ENCODE measurements at regions of chr5 and their contacts with region 1.

Region 1: DNA sequence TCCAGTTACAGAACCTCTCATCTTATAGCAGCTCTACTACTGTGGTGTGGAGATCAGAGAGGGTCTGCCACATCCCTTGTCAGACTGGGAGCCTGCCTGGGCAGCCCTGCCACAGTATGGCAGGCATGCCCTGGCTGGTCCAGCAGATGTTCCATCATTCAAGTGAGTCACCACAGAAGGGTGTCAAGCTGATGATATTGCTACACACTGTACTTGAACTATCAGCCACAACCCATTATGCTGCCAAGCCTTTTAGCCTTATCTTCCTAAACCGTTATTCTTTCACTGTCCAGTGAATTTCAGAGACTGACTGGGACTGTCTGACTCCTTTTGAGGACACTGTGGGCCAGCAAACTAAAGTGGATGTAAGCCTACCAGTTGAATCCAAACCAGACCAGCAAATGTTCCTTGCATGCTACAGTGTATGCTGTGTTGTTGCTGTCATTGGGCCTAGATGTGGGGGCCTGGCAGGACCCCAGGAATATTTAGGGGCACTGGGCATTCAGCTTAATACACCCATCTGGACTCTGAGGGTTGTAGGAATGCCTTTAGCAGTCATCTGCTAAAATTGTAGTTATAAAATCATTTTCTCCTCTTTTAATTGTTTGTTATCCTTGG is 202.6 kb downstream of the NR3C1 start:
- DNase-seq: peak; percentile 96
- H3K4me3 ChIP-seq: no peak overlapping the region
- H3K27ac ChIP-seq: peak overlapping the region; percentile 68
- H3K4me1 ChIP-seq: peaks cover 67% of the 10 kb centered on the region
- H3K27me3 ChIP-seq: no peaks in the 10 kb centered on the region
- CTCF ChIP-seq: no peak

Region 2: DNA sequence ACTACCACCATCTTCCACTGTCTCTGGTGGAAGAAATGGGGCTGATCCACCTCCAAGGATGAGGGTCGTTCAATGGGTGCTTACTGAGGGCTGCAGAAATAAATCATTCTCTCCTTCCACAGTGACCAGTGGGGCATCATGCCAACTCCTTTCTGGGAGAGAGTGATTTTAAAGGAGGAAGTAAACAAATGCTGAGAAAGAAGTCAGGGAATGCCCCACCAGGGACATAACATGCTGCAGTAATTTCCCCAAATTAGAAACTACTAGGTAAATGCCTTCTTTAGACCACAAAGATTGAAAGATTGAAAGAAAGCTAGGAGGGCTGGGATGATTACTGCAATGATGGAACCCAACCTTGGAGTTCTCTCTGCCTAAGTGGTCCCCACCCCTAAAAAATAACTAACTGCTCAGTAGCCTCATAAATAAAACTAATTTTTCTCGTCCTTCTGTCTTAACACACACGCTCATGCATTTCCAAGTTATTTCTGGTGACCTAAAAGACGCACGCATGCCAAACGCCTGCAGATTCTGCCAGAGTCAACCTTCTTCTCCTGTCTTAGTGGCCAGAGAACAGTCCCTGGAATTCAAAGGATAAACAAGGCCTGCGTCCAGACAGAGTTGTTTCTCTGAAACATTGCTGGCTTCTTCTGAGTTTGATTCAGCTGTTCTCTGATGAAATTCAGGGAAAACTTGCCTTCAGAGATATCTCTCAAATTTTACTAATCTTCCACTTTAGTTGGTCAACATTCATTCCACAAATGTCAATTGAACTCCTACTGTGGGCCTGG is 47.4 kb before region 1 on chr5:
- CTCF ChIA-PET with region 1: no interaction called
- dilution Hi-C with region 1: no loop called
- in situ Hi-C with region 1: no loop called
- intact Hi-C with region 1: no loop called
- DNase-seq: no peak
- H3K4me3 ChIP-seq: no peak overlapping the region
- H3K27ac ChIP-seq: no peak overlapping the region
- H3K4me1 ChIP-seq: peaks cover 26% of the 10 kb centered on the region
- H3K27me3 ChIP-seq: no peaks in the 10 kb centered on the region
- CTCF ChIP-seq: no peak

Region 3: DNA sequence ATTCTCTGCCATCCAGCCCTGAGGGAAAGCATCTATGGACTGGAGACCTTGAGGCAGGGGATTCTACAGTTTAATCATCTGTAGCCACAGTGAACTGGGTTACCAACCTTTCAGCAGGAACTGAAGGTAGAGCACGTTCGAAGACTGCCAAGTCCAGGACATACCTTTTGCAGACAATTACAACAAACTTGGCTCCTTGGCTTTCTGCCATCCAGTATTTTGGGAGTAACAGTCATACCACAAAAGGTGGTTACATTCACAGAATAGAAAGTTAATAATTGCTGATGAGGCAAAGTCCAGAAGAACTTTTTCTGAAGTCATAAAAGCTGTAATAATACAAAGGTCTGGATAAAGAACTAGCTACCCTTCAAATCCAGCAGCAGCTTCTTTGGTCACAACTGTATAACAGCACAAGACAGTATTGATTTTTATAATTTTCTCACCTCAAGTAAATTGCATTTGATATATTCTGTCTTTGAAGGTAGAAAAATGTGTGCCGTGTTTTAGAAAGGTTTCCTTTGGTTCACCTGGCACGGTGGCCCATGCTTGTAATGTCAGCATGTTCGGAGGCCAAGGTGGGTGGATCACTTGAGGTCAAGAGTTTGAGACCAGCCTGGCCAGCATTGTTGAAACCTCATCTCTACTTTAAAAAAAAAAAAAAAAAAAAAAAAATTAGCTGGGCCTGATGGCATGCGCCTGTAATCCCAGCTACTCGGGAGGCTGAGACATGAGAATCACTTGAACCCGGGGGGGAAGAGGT is 34.0 kb before region 1 on chr5:
- CTCF ChIA-PET with region 1: no interaction called
- dilution Hi-C with region 1: no loop called
- in situ Hi-C with region 1: no loop called
- intact Hi-C with region 1: no loop called
- DNase-seq: no peak
- H3K4me3 ChIP-seq: no peak overlapping the region
- H3K27ac ChIP-seq: no peak overlapping the region
- H3K4me1 ChIP-seq: no peaks in the 10 kb centered on the region
- H3K27me3 ChIP-seq: no peaks in the 10 kb centered on the region
- CTCF ChIP-seq: no peak

Region 4: GRCh38 chr5:143244000-143244736 is 43.3 kb after region 1 on chr5:
- CTCF ChIA-PET with region 1: no interaction called
- dilution Hi-C with region 1: loop called (anchors 5 kb)
- in situ Hi-C with region 1: no loop called
- intact Hi-C with region 1: loop called (anchors 1 kb)
- DNase-seq: peak; percentile 95
- H3K4me3 ChIP-seq: peak overlapping the region; percentile 15 to 35 (median 31)
- H3K27ac ChIP-seq: peak overlapping the region; percentile 99
- H3K4me1 ChIP-seq: peaks cover 55% of the 10 kb centered on the region
- H3K27me3 ChIP-seq: no peaks in the 10 kb centered on the region
- CTCF ChIP-seq: no peak

Region 5: GRCh38 chr5:143262393-143263174 is 61.7 kb after region 1 on chr5:
- CTCF ChIA-PET with region 1: no interaction called
- dilution Hi-C with region 1: no loop called
- in situ Hi-C with region 1: no loop called
- intact Hi-C with region 1: loop called (anchors 5 kb)
- DNase-seq: peak; percentile 91
- H3K4me3 ChIP-seq: no peak overlapping the region
- H3K27ac ChIP-seq: peak overlapping the region; percentile 97
- H3K4me1 ChIP-seq: peaks cover 32% of the 10 kb centered on the region
- H3K27me3 ChIP-seq: no peaks in the 10 kb centered on the region
- CTCF ChIP-seq: no peak

Region 6: DNA sequence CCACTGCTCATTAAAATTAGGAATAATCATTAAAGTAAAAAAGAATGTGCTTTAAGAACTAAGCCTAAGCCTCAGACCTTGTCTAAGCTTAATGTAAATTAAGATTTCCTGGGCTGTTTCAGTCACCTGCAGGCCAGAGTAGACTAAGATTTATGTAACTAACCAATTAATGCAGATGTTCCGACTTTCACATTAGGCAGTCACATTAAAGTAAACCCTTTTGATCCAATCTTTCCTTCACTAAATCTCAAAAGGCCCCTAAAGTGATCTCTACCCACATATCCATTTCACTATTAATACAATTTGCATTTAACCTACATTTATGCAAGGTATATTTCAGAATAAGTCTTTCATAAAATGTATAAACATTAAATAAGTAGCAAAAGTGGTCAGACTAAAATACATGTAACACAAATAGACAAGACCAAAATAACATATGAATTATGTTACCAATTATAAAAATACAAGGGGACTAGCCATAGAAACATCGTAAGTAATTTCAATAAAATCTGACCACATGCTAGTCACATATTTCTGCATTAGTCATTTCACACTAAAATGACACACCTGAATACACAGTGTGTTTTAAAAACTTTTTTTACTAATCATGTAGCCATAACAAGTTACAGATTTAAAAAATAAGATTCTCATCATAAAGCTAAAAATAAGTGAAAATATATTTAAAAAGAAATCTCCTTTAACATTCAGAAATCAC is 194.9 kb after region 1 on chr5:
- CTCF ChIA-PET with region 1: no interaction called
- dilution Hi-C with region 1: loop called (anchors 5 kb)
- in situ Hi-C with region 1: loop called in 1 of 2 experiments (anchors 25 kb)
- intact Hi-C with region 1: no loop called
- DNase-seq: peak; percentile 58
- H3K4me3 ChIP-seq: peak overlapping the region; percentile 72 to 83 (median 78)
- H3K27ac ChIP-seq: peak overlapping the region; percentile 97
- H3K4me1 ChIP-seq: peaks cover 14% of the 10 kb centered on the region
- H3K27me3 ChIP-seq: no peaks in the 10 kb centered on the region
- CTCF ChIP-seq: no peak

Measured in mammary epithelial cell (primary cell).